Activated T-helper 2 cell treated with anti-CD3 and anti-CD28 coated beads, Interferon-gamma antibody, Interleukin-2, Interleukin-4, amounts not matched to agents 10 μg/mL and 5 μg/mL and 100 μg/mL, durations not matched to agents 14 hours and 24 hours and 36 hours (primary cell): ENCODE measurements at regions of chr5 and their contacts with region 1.

Region 1: GRCh38 chr5:35832762-35833161 is 23.9 kb upstream of the IL7R start:
- DNase-seq: no peak
- H3K4me3 Mint-ChIP-seq: no peak overlapping the region
- H3K27ac Mint-ChIP-seq: peak overlapping the region; percentile 77
- H3K4me1 Mint-ChIP-seq: peaks cover 77% of the 10 kb centered on the region
- H3K27me3 Mint-ChIP-seq: no peaks in the 10 kb centered on the region

Region 2: DNA sequence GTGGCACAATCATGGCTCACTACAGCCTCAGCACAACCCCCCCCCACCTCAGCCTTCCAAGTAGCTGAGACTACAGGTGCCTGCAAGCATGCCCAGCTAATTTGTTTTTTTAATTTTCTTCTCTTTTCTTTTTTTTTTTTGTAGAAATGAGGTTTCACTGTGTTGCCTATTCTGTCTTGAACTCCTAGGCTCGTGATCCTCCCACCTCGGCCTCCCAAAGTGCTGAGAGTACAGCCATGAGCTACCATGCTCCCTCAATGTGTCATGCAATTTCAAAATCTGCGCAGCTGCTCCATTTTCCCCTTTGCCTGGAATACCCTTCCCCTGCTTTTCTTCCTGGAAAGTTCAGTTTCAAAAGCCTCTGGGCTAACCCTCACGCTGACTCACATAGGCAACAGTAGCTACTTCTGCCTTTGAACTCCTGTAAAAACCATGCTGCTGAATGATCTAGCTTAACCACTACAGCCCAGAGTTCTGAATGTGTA is 47.1 kb before region 1 on chr5:
- intact Hi-C with region 1: loop called (anchors 2 kb)
- DNase-seq: no peak
- H3K4me3 Mint-ChIP-seq: no peak overlapping the region
- H3K27ac Mint-ChIP-seq: peak overlapping the region; percentile 85
- H3K4me1 Mint-ChIP-seq: peaks cover 66% of the 10 kb centered on the region
- H3K27me3 Mint-ChIP-seq: no peaks in the 10 kb centered on the region